ENCODE measurements at regions of chr10 and their contacts with region 1.

Region 1: GRCh38 chr10:114320249-114321116 is 81.4 kb downstream of the VWA2 start:
- DNase-seq: peak; percentile 100
- H3K4me3 ChIP-seq: peak overlapping the region in 1 of 3 experiments; percentile 11
- H3K27ac ChIP-seq: peak overlapping the region; percentile 86
- H3K4me1 ChIP-seq: peaks cover 30% of the 10 kb centered on the region
- H3K27me3 ChIP-seq: no peaks in the 10 kb centered on the region
- CTCF ChIP-seq: peak in 1 of 2 donors; percentile 1

Region 2: DNA sequence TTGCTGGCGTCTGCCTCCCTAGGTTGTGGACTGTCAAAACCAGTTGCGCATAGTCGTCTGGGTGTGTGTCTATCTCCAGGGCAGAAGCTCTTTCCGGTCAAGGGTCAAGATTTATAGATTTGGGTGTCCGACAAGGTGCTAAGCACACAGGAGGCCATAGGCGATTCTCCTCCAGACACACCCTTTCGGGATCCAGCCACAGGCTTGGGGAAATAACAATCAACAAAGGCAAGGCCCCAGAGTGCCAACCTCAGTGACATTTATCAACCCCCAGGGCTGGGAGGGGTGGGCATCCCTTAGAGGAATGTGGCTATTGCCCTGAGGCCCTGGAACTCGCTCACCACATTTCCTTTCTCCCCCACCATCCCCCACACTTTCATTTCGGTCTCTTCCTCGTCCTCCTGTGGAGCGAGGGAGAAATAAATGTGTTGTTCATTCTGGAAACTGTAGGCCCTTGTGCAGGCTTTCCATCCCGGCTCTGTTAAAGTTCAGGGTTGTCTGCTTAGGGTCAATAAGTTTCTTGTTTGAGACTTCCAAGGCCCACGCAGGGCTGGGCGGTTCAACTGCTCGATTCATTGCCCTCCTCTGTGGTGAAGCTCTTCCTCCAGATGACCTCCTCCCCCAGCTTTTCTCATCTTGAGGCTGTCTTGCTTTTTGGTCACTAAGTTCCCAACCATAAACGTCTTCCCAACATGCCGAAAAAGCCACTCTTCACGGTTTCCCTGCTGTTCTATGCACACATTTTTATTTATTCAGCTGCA is 26.0 kb after region 1 on chr10:
- CTCF ChIA-PET with region 1: no interaction called
- dilution Hi-C with region 1: no loop called
- in situ Hi-C with region 1: no loop called
- intact Hi-C with region 1: no loop called
- DNase-seq: no peak
- H3K4me3 ChIP-seq: no peak overlapping the region
- H3K27ac ChIP-seq: no peak overlapping the region
- H3K4me1 ChIP-seq: no peaks in the 10 kb centered on the region
- H3K27me3 ChIP-seq: no peaks in the 10 kb centered on the region
- CTCF ChIP-seq: no peak

Region 3: GRCh38 chr10:114388275-114388674 is 67.8 kb after region 1 on chr10:
- CTCF ChIA-PET with region 1: no interaction called
- dilution Hi-C with region 1: no loop called
- in situ Hi-C with region 1: no loop called
- intact Hi-C with region 1: loop called (anchors 2 kb)
- DNase-seq: peak; percentile 87
- H3K4me3 ChIP-seq: no peak overlapping the region
- H3K27ac ChIP-seq: peak overlapping the region; percentile 25
- H3K4me1 ChIP-seq: peaks cover 58% of the 10 kb centered on the region
- H3K27me3 ChIP-seq: no peaks in the 10 kb centered on the region
- CTCF ChIP-seq: no peak

Region 4: GRCh38 chr10:114427124-114427852 is 106.8 kb after region 1 on chr10:
- CTCF ChIA-PET with region 1: no interaction called
- dilution Hi-C with region 1: no loop called
- in situ Hi-C with region 1: loop called in 1 of 2 experiments (anchors 10 kb)
- intact Hi-C with region 1: no loop called
- DNase-seq: no peak
- H3K4me3 ChIP-seq: no peak overlapping the region
- H3K27ac ChIP-seq: no peak overlapping the region
- H3K4me1 ChIP-seq: peaks cover 16% of the 10 kb centered on the region
- H3K27me3 ChIP-seq: no peaks in the 10 kb centered on the region
- CTCF ChIP-seq: no peak